ENCODE measurements at regions of chr3 and their contacts with region 1.

Region 1: DNA sequence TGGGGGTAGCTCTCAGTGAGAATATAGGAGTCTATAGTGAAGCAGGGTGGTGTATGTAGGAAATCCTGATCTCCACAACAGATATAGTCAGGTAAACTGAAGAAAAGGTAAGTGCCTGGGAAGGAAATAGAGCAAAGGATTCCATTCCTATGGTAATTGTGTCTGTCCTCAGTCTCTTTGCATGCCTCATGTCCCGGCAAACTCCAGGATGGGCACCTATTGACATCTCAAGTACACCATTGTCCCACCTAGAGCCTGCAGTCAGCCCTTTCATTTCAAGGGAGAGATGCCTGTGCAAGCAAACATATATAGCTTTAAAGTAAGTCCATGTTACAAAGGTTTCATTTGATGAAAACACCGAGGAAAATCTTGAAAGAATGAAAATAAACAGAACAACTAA is 257.7 kb upstream of the AZI2 start:
- DNase-seq: no peak
- CTCF ChIP-seq: no peak

Region 2: DNA sequence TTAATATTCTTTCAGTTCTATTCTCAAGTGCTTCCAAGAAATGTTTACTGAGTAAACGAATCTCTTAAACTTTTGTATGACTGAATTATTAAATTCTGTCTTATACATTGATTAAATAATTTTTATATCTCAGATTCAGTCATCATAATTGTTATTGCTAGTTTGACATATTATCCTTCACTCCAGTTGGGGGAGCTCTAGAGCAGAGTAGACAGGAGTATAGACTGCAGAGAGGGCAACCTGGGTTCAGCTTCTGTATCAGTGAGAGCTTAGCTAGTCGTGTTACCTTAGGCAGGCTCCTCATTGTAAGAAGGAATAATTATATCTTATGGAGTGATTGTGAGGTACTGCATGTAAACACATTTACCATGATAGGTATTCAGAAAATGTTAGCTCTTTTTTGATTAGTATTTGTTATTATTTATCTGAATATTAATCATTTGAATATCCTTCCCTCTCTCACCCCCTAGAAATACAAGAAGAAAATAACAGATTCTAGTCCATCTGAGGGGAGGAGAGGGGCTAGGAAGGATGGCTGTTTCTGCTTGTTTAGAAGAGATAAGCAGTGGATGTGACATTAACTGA is 288.8 kb before region 1 on chr3:
- CTCF ChIA-PET with region 1: no interaction called
- POLR2A ChIA-PET with region 1: no interaction called
- DNase-seq: peak; percentile 22
- CTCF ChIP-seq: peak; percentile 42

Region 3: DNA sequence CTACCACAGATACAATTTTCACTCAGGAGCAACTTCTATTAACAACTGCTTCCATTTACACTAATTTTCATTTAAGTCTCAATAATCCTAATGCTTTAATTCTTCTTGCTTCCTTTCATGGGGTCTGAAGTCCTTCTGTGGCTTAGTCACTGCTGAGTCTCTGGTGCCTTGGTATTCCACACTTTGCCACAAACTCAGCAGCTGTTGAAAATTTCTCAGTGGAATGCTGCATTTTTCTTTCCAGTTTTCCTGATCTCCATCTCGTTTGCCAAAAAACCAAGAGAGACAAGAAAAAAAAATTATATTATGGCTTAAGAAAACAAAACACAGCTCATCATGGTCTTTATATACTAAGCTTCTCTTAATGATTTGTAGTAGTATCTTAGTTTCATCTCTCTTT is 11.5 kb after region 1 on chr3:
- CTCF ChIA-PET with region 1: interaction called, 11 read pairs
- POLR2A ChIA-PET with region 1: no interaction called
- DNase-seq: no peak
- CTCF ChIP-seq: no peak

Measured in GM10248 (cell line).